ENCODE measurements at regions of chr4 and their contacts with region 1.

Region 1: GRCh38 chr4:74133786-74134499 is 24.0 kb upstream of the MTHFD2L start:
- DNase-seq: peak; percentile 76
- ATAC-seq: peak; percentile 63
- H3K4me3 Mint-ChIP-seq: no peak overlapping the region
- H3K27ac Mint-ChIP-seq: no peak overlapping the region
- H3K4me1 Mint-ChIP-seq: no peaks in the 10 kb centered on the region
- H3K27me3 Mint-ChIP-seq: peaks cover 2% of the 10 kb centered on the region

Region 2: DNA sequence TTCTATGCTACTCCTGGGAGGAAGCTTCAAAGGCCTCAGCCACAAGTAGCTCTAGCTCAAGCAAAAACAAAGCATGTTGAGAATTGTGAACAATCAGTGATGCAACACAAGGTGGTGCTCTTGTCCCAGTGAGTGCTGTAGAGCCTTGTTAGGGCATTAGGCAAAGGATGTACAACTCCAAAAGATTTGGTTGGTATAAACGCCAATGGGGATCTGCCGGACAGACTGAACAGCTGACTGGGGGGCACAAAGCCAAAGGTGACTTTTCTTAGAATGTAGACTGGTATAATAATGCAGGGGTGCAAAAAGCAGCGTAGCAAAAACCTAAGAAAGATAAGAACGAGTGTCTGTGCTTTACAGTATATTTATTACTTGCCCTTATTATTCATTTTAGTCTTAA is 792.5 kb before region 1 on chr4:
- CTCF ChIA-PET with region 1: no interaction called
- POLR2A ChIA-PET with region 1: no interaction called
- intact Hi-C with region 1: loop called in 1 of 2 experiments (anchors 5 kb)
- DNase-seq: peak; percentile 37
- ATAC-seq: no peak
- H3K4me3 Mint-ChIP-seq: no peak overlapping the region
- H3K27ac Mint-ChIP-seq: no peak overlapping the region
- H3K4me1 Mint-ChIP-seq: no peaks in the 10 kb centered on the region
- H3K27me3 Mint-ChIP-seq: peaks cover 2% of the 10 kb centered on the region

Region 3: GRCh38 chr4:73573794-73574406 is 560.0 kb before region 1 on chr4:
- CTCF ChIA-PET with region 1: interaction called, 7 read pairs
- POLR2A ChIA-PET with region 1: no interaction called
- intact Hi-C with region 1: loop called in 1 of 2 experiments (anchors 5 kb)
- DNase-seq: peak; percentile 54
- ATAC-seq: peak; percentile 19
- H3K4me3 Mint-ChIP-seq: no peak overlapping the region
- H3K27ac Mint-ChIP-seq: no peak overlapping the region
- H3K4me1 Mint-ChIP-seq: peaks cover 3% of the 10 kb centered on the region
- H3K27me3 Mint-ChIP-seq: peaks cover 4% of the 10 kb centered on the region

Region 4: DNA sequence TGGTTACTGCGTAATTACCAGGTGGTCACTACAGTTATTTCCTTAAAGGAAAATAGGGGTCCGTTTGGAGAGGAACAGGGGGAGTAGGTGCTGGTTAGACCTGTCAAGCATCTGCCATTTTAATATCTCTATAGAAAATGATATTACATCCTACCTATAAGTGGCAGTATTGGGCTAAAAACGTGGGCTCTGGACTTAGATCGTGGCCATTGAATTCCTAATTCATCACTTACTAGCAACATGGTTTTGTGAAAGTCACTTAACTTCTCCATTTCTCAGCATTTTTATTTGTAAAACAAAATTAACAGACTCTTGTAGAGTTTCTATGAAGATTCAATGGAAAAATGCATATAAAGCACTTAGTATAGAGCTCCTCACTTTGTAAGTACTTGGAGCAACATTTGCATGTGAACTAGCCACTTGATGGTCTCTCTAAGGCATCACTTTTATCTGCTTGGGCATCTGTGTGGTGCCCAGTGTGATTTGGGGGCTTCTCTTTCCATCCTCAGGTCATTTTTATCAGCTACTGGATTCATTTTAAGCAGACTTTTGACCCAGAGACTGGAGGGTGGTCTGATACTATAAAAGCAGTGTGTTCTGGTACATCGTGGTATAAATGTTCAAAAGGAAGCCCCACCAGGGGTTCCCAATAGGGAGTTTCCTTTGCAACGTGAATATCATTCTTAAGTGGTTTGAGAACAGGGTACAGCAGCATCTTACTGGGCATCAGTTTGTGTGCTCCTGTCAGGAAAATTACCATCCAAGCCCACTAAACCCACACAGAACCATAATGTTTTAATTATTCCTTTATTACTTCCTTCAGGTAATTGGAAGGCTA is 471.0 kb before region 1 on chr4:
- CTCF ChIA-PET with region 1: interaction called, 6 read pairs
- POLR2A ChIA-PET with region 1: no interaction called
- intact Hi-C with region 1: loop called in 1 of 2 experiments (anchors 1 kb)
- DNase-seq: no peak
- ATAC-seq: peak; percentile 33
- H3K4me3 Mint-ChIP-seq: no peak overlapping the region
- H3K27ac Mint-ChIP-seq: no peak overlapping the region
- H3K4me1 Mint-ChIP-seq: peaks cover 3% of the 10 kb centered on the region
- H3K27me3 Mint-ChIP-seq: peaks cover 2% of the 10 kb centered on the region

Region 5: GRCh38 chr4:74353858-74354257 is 219.9 kb after region 1 on chr4:
- CTCF ChIA-PET with region 1: no interaction called
- POLR2A ChIA-PET with region 1: no interaction called
- intact Hi-C with region 1: no loop called
- DNase-seq: no peak
- ATAC-seq: no peak
- H3K4me3 Mint-ChIP-seq: no peak overlapping the region
- H3K27ac Mint-ChIP-seq: no peak overlapping the region
- H3K4me1 Mint-ChIP-seq: no peaks in the 10 kb centered on the region
- H3K27me3 Mint-ChIP-seq: peaks cover 5% of the 10 kb centered on the region